ENCODE measurements at regions of chr17 and their contacts with region 1.

Region 1: GRCh38 chr17:58006924-58007780 is at the start of gene SRSF1:
- DNase-seq: peak; percentile 96
- H3K27ac ChIP-seq: peak within 1 kb of the TSS; percentile 96
- CTCF ChIP-seq: no peak

Region 2: DNA sequence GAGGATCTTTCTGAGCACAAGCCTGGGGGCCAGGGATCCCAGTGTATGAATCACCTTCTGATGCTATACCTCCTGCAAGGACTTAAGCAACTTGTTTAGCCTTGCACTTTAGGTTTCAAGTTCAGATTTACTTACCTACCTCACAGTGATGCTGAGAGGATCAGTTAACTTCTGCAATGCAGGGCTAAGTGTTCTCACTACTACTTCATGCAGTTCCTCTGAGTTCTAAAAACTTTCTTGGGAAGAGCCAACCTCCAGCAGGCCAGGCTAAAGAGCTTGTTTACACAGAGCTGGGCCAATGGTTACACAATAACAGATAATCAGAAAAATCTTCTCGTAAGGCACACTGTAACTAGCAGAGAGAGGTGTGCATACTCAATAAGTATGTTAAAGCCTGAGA is 32.1 kb before region 1 on chr17:
- CTCF ChIA-PET with region 1: no interaction called
- POLR2A ChIA-PET with region 1: no interaction called
- DNase-seq: no peak
- H3K27ac ChIP-seq: no peak overlapping the region
- CTCF ChIP-seq: no peak

Region 3: DNA sequence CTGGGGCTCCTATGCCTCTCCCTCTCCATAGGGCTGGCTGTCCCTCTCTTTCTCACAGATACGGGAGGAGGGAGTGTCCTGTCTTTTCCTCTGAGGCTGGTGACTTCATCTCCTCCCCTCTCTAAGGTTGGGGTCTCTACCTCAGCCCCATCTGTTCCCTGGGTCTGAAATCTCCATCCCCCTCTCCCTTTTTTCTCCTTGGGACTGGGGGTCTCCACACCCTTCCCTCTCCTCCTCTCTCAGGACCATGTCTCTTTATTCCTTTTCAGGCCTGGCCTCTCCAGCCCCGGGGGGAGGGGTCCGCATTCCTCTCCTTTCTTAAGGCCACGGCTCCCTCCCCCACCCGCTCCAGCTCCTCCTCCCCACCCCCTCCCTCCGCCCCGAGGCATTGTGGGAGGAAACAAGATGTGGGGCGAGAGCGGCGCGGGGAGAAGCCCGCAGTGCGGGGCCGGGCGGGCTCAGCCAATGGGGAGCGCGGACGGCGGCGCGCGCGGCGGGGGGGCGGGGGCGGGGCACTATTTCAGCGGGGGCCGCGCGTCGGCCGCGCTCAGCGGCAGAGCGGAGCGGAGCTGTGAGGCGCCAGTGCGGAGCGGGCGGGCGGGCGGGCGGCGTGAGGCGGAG is 75.8 kb after region 1 on chr17 and contains the start of gene DYNLL2:
- CTCF ChIA-PET with region 1: no interaction called
- POLR2A ChIA-PET with region 1: interaction called, 10 read pairs
- DNase-seq: peak; percentile 96
- H3K27ac ChIP-seq: peak within 1 kb of the TSS; percentile 77
- CTCF ChIP-seq: no peak